WTC11 (cell line): ENCODE measurements at regions of chr2 and their contacts with region 1.

Region 1: DNA sequence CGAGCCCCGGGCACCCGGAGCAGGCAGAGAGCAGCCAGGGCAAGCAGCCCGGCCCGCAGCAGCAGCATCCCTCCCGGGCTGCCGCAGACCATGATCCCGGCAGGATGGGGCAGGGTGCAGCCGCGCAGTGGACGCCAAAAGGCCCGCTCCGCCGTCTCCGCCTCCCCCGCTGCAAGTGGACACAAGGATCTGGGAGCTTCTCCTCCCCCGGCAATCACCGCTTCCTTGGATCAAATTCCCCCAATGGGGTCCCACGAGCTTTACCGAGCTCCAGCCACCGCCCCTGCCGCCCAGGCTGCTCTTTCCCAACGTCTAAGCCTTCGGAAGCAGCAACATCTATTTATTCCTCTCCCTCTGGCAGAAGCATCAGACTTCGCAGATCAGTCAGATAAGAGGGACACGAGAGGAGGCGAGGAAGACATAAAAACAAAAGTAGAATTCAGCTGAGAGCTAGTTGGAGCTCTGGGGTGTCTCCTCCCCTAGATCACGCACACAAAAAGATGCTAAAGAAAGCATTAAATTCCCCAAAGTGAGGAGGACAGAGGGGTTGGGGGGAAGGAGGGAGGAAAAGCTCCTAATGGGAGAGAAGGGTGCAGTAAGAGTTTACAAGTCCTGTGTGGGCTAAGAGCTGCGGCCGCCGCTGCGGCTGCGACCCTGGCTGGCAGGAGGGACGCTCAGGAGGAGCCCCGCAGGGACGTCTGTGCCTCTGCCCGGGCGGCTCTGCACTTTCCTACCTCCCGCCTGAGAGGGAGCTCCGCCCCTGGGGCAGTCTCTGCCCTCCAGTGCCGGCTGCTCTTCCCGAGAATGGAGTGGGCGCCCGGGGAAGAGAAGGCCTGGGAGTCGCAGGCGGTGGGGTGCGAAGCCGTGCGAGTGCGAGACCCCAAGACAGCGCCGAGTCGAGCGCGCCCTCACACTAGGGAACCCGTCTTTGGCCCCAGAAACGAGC is at the start of gene FRZB:
- DNase-seq: peak; percentile 66
- ATAC-seq: peak; percentile 73
- H3K4me3 Mint-ChIP-seq: peak within 1 kb of the TSS; percentile 96
- H3K27ac Mint-ChIP-seq: no peak within 1 kb of the TSS
- H3K4me1 Mint-ChIP-seq: peaks cover 20% of the 10 kb centered on the region
- H3K27me3 Mint-ChIP-seq: peaks cover 45% of the 10 kb centered on the region
- CTCF ChIP-seq: no peak
- total RNA-seq, gene FRZB: 1.2 to 1.9 TPM (median 1.5 TPM) in 3 replicates

Region 2: GRCh38 chr2:182763311-182763912 is 103.3 kb before region 1 on chr2:
- CTCF ChIA-PET with region 1: interaction called, 36 read pairs
- POLR2A ChIA-PET with region 1: no interaction called
- DNase-seq: no peak
- ATAC-seq: peak; percentile 76
- H3K4me3 Mint-ChIP-seq: no peak overlapping the region
- H3K27ac Mint-ChIP-seq: no peak overlapping the region
- H3K4me1 Mint-ChIP-seq: peaks cover 2% of the 10 kb centered on the region
- H3K27me3 Mint-ChIP-seq: no peaks in the 10 kb centered on the region
- CTCF ChIP-seq: peak; percentile 51; the same call in 1 of the 2 replicates

Region 3: GRCh38 chr2:182784777-182785176 is 82.0 kb before region 1 on chr2:
- CTCF ChIA-PET with region 1: interaction called, 37 read pairs
- POLR2A ChIA-PET with region 1: no interaction called
- DNase-seq: no peak
- ATAC-seq: peak; percentile 70
- H3K4me3 Mint-ChIP-seq: no peak overlapping the region
- H3K27ac Mint-ChIP-seq: no peak overlapping the region
- H3K4me1 Mint-ChIP-seq: peaks cover 3% of the 10 kb centered on the region; the same call in 1 of the 2 replicates
- H3K27me3 Mint-ChIP-seq: no peaks in the 10 kb centered on the region
- CTCF ChIP-seq: 0 out of 2 replicates have a peak, but pooled peaks have one; percentile 26

Region 4: GRCh38 chr2:182792441-182792840 is 74.3 kb before region 1 on chr2:
- CTCF ChIA-PET with region 1: interaction called, 16 read pairs
- POLR2A ChIA-PET with region 1: no interaction called
- DNase-seq: no peak
- ATAC-seq: no peak
- H3K4me3 Mint-ChIP-seq: no peak overlapping the region
- H3K27ac Mint-ChIP-seq: no peak overlapping the region
- H3K4me1 Mint-ChIP-seq: peaks cover 10% of the 10 kb centered on the region; the same call in 1 of the 2 replicates
- H3K27me3 Mint-ChIP-seq: no peaks in the 10 kb centered on the region
- CTCF ChIP-seq: no peak

Region 5: GRCh38 chr2:182807319-182807718 is 59.4 kb before region 1 on chr2:
- CTCF ChIA-PET with region 1: no interaction called
- POLR2A ChIA-PET with region 1: no interaction called
- DNase-seq: no peak
- ATAC-seq: no peak
- H3K4me3 Mint-ChIP-seq: no peak overlapping the region
- H3K27ac Mint-ChIP-seq: no peak overlapping the region
- H3K4me1 Mint-ChIP-seq: peaks cover 9% of the 10 kb centered on the region
- H3K27me3 Mint-ChIP-seq: peaks cover 2% of the 10 kb centered on the region
- CTCF ChIP-seq: no peak

Region 6: DNA sequence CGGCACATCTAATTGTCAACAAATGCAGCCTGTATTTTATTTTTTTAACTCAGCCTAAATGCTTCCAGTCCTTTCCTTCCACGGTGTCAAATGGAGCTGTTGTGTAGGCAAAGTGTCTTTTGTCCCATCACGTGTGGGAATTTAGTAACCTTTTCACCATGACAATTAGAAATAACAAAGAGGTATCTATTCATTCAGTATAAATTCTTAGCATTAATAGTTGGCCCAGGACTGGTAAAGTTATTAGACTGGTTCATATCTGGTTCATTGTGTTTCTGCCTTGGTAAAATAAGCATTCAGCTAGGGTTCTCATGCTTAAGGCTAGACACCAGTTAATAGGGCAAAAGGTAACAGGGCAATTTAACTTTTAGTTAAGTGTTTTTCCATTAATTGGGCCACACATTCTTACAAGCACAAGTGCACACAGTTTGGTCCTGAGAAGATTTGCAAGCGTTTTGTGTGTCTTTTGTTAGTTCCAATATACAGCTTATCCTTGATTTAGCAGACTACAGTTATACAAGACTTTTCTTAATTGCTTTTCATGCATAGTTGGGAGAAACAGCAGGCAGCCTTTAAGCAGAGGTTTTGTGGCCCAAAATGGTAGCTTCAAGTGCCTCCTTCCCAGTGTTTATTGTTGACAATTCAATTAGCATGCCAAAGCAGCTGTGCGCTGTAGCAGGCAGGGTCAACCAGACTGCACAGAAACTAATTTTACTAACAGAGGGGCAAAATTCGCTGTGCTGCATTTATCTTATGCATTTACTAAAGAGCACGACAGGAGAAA is 48.0 kb before region 1 on chr2:
- CTCF ChIA-PET with region 1: interaction called, 16 read pairs
- POLR2A ChIA-PET with region 1: interaction called, 5 read pairs
- DNase-seq: peak; percentile 20
- ATAC-seq: peak; percentile 91
- H3K4me3 Mint-ChIP-seq: peak overlapping the region; percentile 31
- H3K27ac Mint-ChIP-seq: peak overlapping the region; percentile 82
- H3K4me1 Mint-ChIP-seq: peaks cover 33% of the 10 kb centered on the region
- H3K27me3 Mint-ChIP-seq: peaks cover 11% of the 10 kb centered on the region
- CTCF ChIP-seq: no peak

Region 7: GRCh38 chr2:182845794-182846417 is 20.8 kb before region 1 on chr2:
- CTCF ChIA-PET with region 1: interaction called, 16 read pairs
- POLR2A ChIA-PET with region 1: no interaction called
- DNase-seq: no peak
- ATAC-seq: no peak
- H3K4me3 Mint-ChIP-seq: no peak overlapping the region
- H3K27ac Mint-ChIP-seq: no peak overlapping the region
- H3K4me1 Mint-ChIP-seq: no peaks in the 10 kb centered on the region
- H3K27me3 Mint-ChIP-seq: no peaks in the 10 kb centered on the region
- CTCF ChIP-seq: no peak

Region 8: GRCh38 chr2:182980115-182980514 is 113.4 kb after region 1 on chr2:
- CTCF ChIA-PET with region 1: interaction called, 11 read pairs
- POLR2A ChIA-PET with region 1: no interaction called
- DNase-seq: no peak
- ATAC-seq: peak; percentile 43; the same call in 1 of the 2 replicates
- H3K4me3 Mint-ChIP-seq: no peak overlapping the region
- H3K27ac Mint-ChIP-seq: no peak overlapping the region
- H3K4me1 Mint-ChIP-seq: no peaks in the 10 kb centered on the region
- H3K27me3 Mint-ChIP-seq: no peaks in the 10 kb centered on the region
- CTCF ChIP-seq: no peak; the same call in 1 of the 2 replicates